Vagina (tissue), 2 donors: ENCODE measurements at regions of chr18 and their contacts with region 1.

Region 1: DNA sequence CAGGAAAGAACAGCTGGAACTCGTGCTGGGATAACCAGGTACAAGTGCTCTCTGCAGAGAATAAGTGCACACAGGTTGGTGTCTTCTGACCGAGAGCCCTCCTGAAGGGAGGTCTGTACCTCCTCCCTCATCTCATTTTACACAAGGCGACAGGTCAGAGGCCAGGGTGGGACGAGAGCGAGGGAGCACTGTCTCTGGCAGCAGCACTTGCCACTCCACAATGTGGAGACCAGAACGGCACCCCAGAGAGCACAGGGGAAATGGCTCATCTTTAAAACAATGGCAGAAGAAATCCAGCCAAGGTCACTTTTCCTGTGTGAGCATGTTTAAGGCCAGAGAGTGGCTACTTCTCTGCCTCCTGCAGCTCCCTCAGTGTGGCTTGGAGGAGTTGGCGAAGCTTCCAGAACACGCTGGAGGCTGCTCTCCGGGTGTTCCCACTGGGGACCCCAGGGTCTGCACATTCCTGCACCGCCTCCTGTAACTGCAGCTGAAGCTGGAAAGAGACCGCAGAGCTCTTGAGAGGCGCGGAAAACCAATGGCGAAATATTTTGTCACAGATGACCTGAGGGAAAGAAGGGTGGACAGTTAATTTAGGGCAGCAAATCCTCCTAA is 20.8 kb downstream of the DIPK1C start:
- DNase-seq: no peak
- H3K4me3 ChIP-seq: no peak overlapping the region
- H3K27ac ChIP-seq: no peak overlapping the region
- H3K4me1 ChIP-seq: no peaks in the 10 kb centered on the region
- H3K27me3 ChIP-seq: no peaks in the 10 kb centered on the region
- CTCF ChIP-seq: no peak
- POLR2A ChIP-seq: no peak

Region 2: DNA sequence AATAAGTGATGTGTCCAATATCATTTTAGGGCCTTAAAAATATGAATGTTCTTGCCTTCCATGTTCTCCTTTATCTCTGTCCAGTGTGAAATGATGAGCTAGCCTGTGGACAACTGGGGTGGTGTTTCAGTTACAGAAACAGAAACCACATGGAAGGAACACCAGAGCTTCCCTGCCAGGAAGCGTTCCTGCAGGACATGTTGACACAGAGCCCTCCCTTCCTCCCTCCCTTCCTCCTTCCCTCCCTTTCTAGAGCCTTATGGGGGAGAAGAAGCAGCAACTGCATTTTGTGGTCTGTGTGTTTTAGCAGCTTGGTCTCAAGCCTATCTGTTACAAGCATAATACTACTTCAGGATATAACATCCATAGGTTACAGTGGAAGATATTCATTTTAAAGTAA is 1028.8 kb before region 1 on chr18:
- intact Hi-C with region 1: loop called (anchors 10 kb)
- DNase-seq: no peak
- H3K4me3 ChIP-seq: no peak overlapping the region
- H3K27ac ChIP-seq: no peak overlapping the region
- H3K4me1 ChIP-seq: no peaks in the 10 kb centered on the region
- H3K27me3 ChIP-seq: no peaks in the 10 kb centered on the region
- CTCF ChIP-seq: no peak
- POLR2A ChIP-seq: no peak

Region 3: DNA sequence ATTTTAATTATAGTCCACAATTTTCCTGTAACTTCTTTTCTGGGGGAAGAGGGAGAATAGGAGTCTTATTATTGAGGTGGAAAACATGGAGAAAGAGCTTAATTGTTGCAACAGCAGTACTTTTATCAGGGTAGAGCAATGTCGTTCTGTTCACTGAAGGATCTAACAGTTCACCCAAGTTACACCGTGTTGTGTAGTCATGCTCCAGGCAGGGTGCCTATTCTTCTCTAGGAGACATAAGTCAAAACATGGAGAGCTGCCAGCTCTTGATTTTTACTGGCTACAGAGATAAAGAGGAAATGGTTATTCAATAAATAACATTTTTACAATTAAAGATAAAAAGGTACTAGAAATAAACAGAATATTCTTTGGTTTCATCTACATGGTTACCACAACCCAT is 974.2 kb before region 1 on chr18:
- intact Hi-C with region 1: no loop called
- DNase-seq: no peak
- H3K4me3 ChIP-seq: no peak overlapping the region
- H3K27ac ChIP-seq: no peak overlapping the region
- H3K4me1 ChIP-seq: no peaks in the 10 kb centered on the region
- H3K27me3 ChIP-seq: no peaks in the 10 kb centered on the region
- CTCF ChIP-seq: no peak
- POLR2A ChIP-seq: no peak

Region 4: GRCh38 chr18:74489676-74490075 is 53.4 kb after region 1 on chr18:
- intact Hi-C with region 1: no loop called
- DNase-seq: peak in 1 of 2 donors; percentile 43
- H3K4me3 ChIP-seq: no peak overlapping the region
- H3K27ac ChIP-seq: no peak overlapping the region
- H3K4me1 ChIP-seq: peaks cover 23% of the 10 kb centered on the region
- H3K27me3 ChIP-seq: no peaks in the 10 kb centered on the region
- CTCF ChIP-seq: no peak
- POLR2A ChIP-seq: no peak